Naive thymus-derived CD4-positive, alpha-beta T cell (primary cell): ENCODE measurements at regions of chrX and their contacts with region 1.

Region 1: GRCh38 chrX:132532955-132533354 is 44.1 kb upstream of the MBNL3 start:
- DNase-seq: no peak
- ATAC-seq: no peak
- H3K4me3 ChIP-seq: no peak overlapping the region
- H3K4me3 Mint-ChIP-seq: no peak overlapping the region
- H3K27ac ChIP-seq: no peak overlapping the region
- H3K27ac Mint-ChIP-seq: no peak overlapping the region
- H3K4me1 ChIP-seq: no peaks in the 10 kb centered on the region
- H3K4me1 Mint-ChIP-seq: peaks cover 0 to 4% (median 0%) of the 10 kb centered on the region in 7 donors
- H3K27me3 ChIP-seq: no peaks in the 10 kb centered on the region
- H3K27me3 Mint-ChIP-seq: peaks cover 0 to 10% (median 0%) of the 10 kb centered on the region in 5 donors

Region 2: GRCh38 chrX:132576939-132577338 is 44.0 kb after region 1 on chrX:
- CTCF ChIA-PET with region 1: no interaction called
- POLR2A ChIA-PET with region 1: no interaction called
- intact Hi-C with region 1: loop called in 1 of 2 experiments (anchors 2 kb)
- DNase-seq: no peak
- ATAC-seq: no peak
- H3K4me3 ChIP-seq: no peak overlapping the region
- H3K4me3 Mint-ChIP-seq: no peak overlapping the region
- H3K27ac ChIP-seq: no peak overlapping the region
- H3K27ac Mint-ChIP-seq: no peak overlapping the region
- H3K4me1 ChIP-seq: no peaks in the 10 kb centered on the region
- H3K4me1 Mint-ChIP-seq: no peaks in the 10 kb centered on the region
- H3K27me3 ChIP-seq: no peaks in the 10 kb centered on the region
- H3K27me3 Mint-ChIP-seq: peaks cover 0 to 3% (median 0%) of the 10 kb centered on the region in 5 donors

Region 3: DNA sequence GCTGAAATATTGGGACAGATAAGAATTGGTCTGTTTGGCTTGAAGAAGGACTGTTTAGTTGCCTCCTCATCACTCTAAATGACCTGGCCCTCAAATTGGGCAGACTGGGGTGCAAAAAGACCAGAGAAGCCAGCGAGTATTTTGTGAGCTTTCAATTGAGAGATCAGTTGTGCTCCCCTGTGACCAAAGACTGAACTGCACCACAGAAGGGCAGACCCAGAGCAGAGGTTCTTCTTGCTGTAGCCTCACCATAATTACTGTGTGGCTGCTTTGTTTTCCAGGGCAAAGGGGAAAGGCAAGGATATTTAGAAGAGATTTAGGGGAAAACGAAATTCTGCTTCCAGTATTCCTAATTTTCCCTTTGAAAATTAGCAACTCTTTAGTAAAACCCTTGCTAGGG is 59.9 kb after region 1 on chrX:
- CTCF ChIA-PET with region 1: no interaction called
- POLR2A ChIA-PET with region 1: no interaction called
- intact Hi-C with region 1: no loop called
- DNase-seq: peak in 3 of 9 donors; percentile 2 to 13 (median 2)
- ATAC-seq: no peak
- H3K4me3 ChIP-seq: no peak overlapping the region
- H3K4me3 Mint-ChIP-seq: no peak overlapping the region
- H3K27ac ChIP-seq: no peak overlapping the region
- H3K27ac Mint-ChIP-seq: no peak overlapping the region
- H3K4me1 ChIP-seq: no peaks in the 10 kb centered on the region
- H3K4me1 Mint-ChIP-seq: no peaks in the 10 kb centered on the region
- H3K27me3 ChIP-seq: no peaks in the 10 kb centered on the region
- H3K27me3 Mint-ChIP-seq: peaks cover 0 to 3% (median 0%) of the 10 kb centered on the region in 5 donors